ENCODE measurements at regions of chr6 and their contacts with region 1.

Region 1: GRCh38 chr6:131281471-131282270 is 146.4 kb downstream of the AKAP7 start:
- DNase-seq: peak; percentile 89
- H3K4me3 Mint-ChIP-seq: peak overlapping the region; percentile 75
- H3K27ac Mint-ChIP-seq: peak overlapping the region; percentile 88
- H3K4me1 Mint-ChIP-seq: peaks cover 18% of the 10 kb centered on the region
- H3K27me3 Mint-ChIP-seq: no peaks in the 10 kb centered on the region

Region 2: GRCh38 chr6:131199568-131200272 is 82.0 kb before region 1 on chr6:
- intact Hi-C with region 1: loop called (anchors 1 kb)
- DNase-seq: peak; percentile 93
- H3K4me3 Mint-ChIP-seq: peak overlapping the region; percentile 81
- H3K27ac Mint-ChIP-seq: peak overlapping the region; percentile 95
- H3K4me1 Mint-ChIP-seq: peaks cover 45% of the 10 kb centered on the region
- H3K27me3 Mint-ChIP-seq: no peaks in the 10 kb centered on the region